Esophagus muscularis mucosa (tissue), 4 donors: ENCODE measurements at regions of chr5 and their contacts with region 1.

Region 1: DNA sequence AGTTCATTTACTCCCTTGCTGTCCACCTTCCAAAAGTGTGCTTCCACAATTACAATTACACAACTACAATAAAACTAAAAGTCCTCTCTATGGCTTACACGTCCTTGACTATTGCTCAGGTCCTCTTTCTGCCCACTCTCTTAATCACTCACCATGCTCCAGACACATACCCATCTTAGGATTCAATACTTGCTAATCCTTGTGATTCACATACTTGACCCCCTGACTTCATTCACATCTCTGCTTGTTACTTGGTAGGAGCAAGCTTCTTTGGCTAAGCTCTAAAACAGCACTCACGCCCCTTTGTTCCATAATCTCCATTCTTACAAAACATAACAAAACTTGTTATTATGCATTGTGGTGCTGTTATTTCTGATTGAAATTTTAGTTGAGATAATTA is 215.8 kb downstream of the EDIL3 start:
- DNase-seq: no peak
- H3K4me3 ChIP-seq: no peak overlapping the region
- H3K27ac ChIP-seq: no peak overlapping the region
- H3K4me1 ChIP-seq: no peaks in the 10 kb centered on the region
- H3K27me3 ChIP-seq: no peaks in the 10 kb centered on the region
- CTCF ChIP-seq: no peak
- EP300 ChIP-seq: no peak
- POLR2A ChIP-seq: no peak

Region 2: GRCh38 chr5:83340511-83340918 is 828.3 kb before region 1 on chr5:
- intact Hi-C with region 1: loop called (anchors 10 kb)
- DNase-seq: no peak
- H3K4me3 ChIP-seq: no peak overlapping the region
- H3K27ac ChIP-seq: no peak overlapping the region
- H3K4me1 ChIP-seq: peaks cover 0 to 5% (median 0%) of the 10 kb centered on the region in 4 donors
- H3K27me3 ChIP-seq: no peaks in the 10 kb centered on the region
- CTCF ChIP-seq: no peak
- EP300 ChIP-seq: no peak
- POLR2A ChIP-seq: no peak

Region 3: GRCh38 chr5:84213861-84214260 is 45.0 kb after region 1 on chr5:
- intact Hi-C with region 1: no loop called
- DNase-seq: no peak
- H3K4me3 ChIP-seq: no peak overlapping the region
- H3K27ac ChIP-seq: no peak overlapping the region
- H3K4me1 ChIP-seq: no peaks in the 10 kb centered on the region
- H3K27me3 ChIP-seq: no peaks in the 10 kb centered on the region
- CTCF ChIP-seq: no peak
- EP300 ChIP-seq: no peak
- POLR2A ChIP-seq: no peak